Colonic mucosa (tissue), 4 donors: ENCODE measurements at regions of chr3 and their contacts with region 1.

Region 1: DNA sequence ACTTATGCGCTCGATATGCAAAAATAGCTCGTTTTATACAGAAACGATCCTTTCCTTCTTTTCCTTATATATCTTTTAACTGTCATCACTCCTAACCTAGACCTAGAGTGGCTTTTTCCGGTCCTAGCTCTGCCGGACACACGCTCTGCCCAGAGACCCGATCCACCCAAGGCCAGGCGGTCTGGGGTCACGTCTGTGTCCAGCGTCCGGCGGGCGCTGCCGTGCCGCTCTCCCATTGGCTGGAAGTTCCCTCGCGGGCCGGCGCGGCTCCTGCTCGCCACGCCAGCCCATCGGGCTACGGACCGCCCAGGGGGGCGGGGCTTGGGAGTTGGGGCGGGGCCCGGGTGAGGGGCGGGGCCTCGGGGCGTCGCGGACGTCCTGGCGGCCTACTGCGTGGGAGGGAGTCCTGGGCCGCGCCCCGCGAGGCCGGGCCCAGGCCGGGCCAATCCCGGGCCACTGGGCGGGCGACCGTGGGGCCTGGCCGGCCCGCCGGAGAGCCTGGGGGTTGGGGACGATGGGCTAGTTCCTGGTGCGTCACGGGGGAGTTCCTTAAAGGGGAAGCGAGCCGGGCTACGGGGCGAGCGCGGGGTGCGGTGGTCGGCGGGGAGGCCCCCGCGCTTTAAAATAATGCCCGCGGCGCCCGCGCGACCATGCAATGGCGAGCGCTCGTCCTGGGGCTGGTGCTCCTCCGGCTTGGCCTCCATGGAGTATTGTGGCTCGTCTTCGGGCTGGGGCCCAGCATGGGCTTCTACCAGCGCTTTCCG is at the start of gene EDEM1:
- DNase-seq: peak; percentile 97
- H3K4me3 ChIP-seq: peak within 1 kb of the TSS; percentile 99
- H3K27ac ChIP-seq: peak within 1 kb of the TSS; percentile 99
- H3K4me1 ChIP-seq: no peaks in the 10 kb centered on the region
- H3K27me3 ChIP-seq: no peaks in the 10 kb centered on the region
- CTCF ChIP-seq: no peak
- total RNA-seq, gene EDEM1: 38.9 to 49.7 TPM

Region 2: GRCh38 chr3:5122030-5122740 is 65.2 kb before region 1 on chr3 and contains the start of gene ARL8B:
- intact Hi-C with region 1: loop called (anchors 5 kb)
- DNase-seq: peak; percentile 91
- H3K4me3 ChIP-seq: peak within 1 kb of the TSS; percentile 100
- H3K27ac ChIP-seq: peak within 1 kb of the TSS; percentile 90
- H3K4me1 ChIP-seq: peaks cover 8% of the 10 kb centered on the region
- H3K27me3 ChIP-seq: no peaks in the 10 kb centered on the region
- CTCF ChIP-seq: peak; percentile 94
- total RNA-seq, gene ARL8B: 40.8 to 51.4 TPM